ENCODE measurements at regions of chr2 and their contacts with region 1.

Region 1: GRCh38 chr2:113756355-113757137 is at the start of gene SLC35F5:
- DNase-seq: peak; percentile 95 to 96
- ATAC-seq: peak; percentile 95 to 98 (median 97)
- H3K4me3 ChIP-seq: peak within 1 kb of the TSS; percentile 84
- H3K27ac ChIP-seq: peak within 1 kb of the TSS; percentile 92
- H3K4me1 ChIP-seq: peaks cover 22% of the 10 kb centered on the region
- H3K27me3 ChIP-seq: no peaks in the 10 kb centered on the region
- CTCF ChIP-seq: no peak
- total RNA-seq, gene SLC35F5: 45.7 to 86.3 (median 50.7) TPM

Region 2: DNA sequence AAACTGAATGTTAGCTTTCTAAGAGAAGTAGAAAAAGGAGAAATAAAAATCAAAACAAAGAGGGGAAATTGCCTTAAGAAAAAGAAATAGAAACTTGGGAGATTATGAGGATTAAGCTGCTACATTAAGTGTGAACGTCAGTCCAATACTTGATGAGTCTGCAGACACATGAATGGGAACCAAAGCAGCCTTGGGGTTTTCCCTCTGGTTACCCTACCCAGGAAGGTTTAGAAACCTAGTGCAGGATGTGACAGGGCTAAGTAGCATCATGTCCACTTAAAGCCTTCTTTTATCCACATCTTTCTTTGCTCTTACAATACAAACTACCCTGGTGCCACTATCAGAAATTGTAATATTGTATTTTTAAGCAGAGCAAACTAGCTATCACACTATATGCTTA is 22.4 kb before region 1 on chr2:
- intact Hi-C with region 1: no loop called
- DNase-seq: no peak
- ATAC-seq: no peak
- H3K4me3 ChIP-seq: no peak overlapping the region
- H3K27ac ChIP-seq: no peak overlapping the region
- H3K4me1 ChIP-seq: peaks cover 9% of the 10 kb centered on the region
- H3K27me3 ChIP-seq: no peaks in the 10 kb centered on the region
- CTCF ChIP-seq: no peak

Region 3: GRCh38 chr2:113818382-113818951 is 61.9 kb after region 1 on chr2:
- intact Hi-C with region 1: loop called in 1 of 2 experiments (anchors 5 kb)
- DNase-seq: peak; percentile 21 to 58
- ATAC-seq: peak; percentile 93 to 99 (median 96)
- H3K4me3 ChIP-seq: peak overlapping the region; percentile 43
- H3K27ac ChIP-seq: peak overlapping the region; percentile 75
- H3K4me1 ChIP-seq: peaks cover 5% of the 10 kb centered on the region
- H3K27me3 ChIP-seq: no peaks in the 10 kb centered on the region
- CTCF ChIP-seq: no peak

Region 4: DNA sequence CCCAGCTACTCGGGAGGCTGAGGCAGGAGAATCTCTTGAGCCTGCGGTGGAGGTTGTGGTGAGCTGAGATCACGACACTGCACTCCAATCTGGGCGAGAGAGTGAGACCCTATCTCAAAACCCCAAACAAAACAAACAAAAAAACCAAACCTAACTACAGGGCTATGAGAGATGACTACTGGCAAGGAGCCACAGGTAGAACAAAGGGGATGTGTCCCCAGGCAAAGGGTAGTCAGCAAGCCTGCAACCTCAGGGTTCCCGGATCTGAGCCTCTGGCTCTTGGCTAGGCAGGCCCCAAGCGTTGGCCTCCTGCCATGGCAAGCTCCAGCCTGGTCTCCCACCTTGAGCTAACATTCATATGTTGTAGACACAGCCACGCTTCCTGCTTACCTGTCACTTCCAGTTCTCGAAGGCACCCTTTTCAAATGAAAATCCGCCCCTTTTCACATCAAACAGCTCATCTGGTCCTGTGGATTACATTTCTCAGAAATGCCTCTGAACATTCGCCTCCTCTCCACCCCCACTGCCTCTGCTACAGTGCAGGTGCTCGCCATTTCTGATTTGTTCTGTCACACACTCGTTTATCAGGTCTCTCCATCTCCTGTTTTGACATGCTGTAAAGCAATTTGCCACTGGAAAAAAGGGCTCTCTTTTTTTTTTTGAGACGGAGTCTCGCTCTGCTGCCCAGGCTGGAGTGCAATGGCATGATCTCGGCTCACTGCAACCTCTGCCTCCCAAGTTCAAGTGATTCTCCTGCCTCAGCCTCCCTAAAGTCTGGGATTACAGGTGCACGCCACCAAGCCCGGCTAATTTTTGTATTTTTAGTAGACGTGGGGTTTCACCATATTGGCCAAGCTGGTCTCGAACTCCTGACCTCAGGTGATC is 120.2 kb after region 1 on chr2:
- intact Hi-C with region 1: no loop called
- DNase-seq: no peak
- ATAC-seq: no peak
- H3K4me3 ChIP-seq: no peak overlapping the region
- H3K27ac ChIP-seq: no peak overlapping the region
- H3K4me1 ChIP-seq: peaks cover 6% of the 10 kb centered on the region
- H3K27me3 ChIP-seq: no peaks in the 10 kb centered on the region
- CTCF ChIP-seq: no peak

Region 5: GRCh38 chr2:113889471-113890252 is 133.1 kb after region 1 on chr2 and contains the start of gene ACTR3:
- intact Hi-C with region 1: loop called (anchors 1 to 5 kb)
- DNase-seq: peak; percentile 98
- ATAC-seq: peak; percentile 96 to 99 (median 98)
- H3K4me3 ChIP-seq: peak within 1 kb of the TSS; percentile 92
- H3K27ac ChIP-seq: peak within 1 kb of the TSS; percentile 98
- H3K4me1 ChIP-seq: peaks cover 47% of the 10 kb centered on the region
- H3K27me3 ChIP-seq: no peaks in the 10 kb centered on the region
- CTCF ChIP-seq: no peak
- total RNA-seq, gene ACTR3: 55.5 to 113 (median 88.2) TPM

Region 6: DNA sequence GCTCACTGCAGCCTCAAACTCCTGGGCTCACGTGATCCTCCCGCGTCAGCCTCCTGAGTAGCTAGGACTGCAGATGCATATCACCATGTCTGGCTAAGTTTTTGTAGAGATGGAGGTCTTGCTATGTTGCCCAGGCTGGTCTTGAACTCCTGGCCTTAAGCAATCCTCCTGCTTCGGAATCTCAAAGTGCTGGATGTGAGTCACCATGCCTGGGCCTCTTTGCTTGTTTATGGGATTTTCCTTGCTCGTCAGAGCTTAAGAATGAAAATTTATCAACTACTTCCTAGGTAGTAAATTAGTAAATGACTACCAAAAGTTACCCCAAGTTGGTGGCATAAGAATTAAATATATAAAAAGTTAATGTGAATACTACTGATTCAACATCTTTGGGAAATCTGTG is 184.3 kb after region 1 on chr2:
- intact Hi-C with region 1: loop called in 1 of 2 experiments (anchors 10 kb)
- DNase-seq: no peak
- ATAC-seq: no peak
- H3K4me3 ChIP-seq: no peak overlapping the region
- H3K27ac ChIP-seq: no peak overlapping the region
- H3K4me1 ChIP-seq: no peaks in the 10 kb centered on the region
- H3K27me3 ChIP-seq: no peaks in the 10 kb centered on the region
- CTCF ChIP-seq: no peak

Measured in psoas muscle (tissue), 8 donors.